Activated naive CD4-positive, alpha-beta T cell treated with anti-CD3 and anti-CD28 coated beads for 36 hours (primary cell): ENCODE measurements at regions of chr18 and their contacts with region 1.

Region 1: GRCh38 chr18:6920099-6920899 is 190.8 kb downstream of the ARHGAP28 start:
- DNase-seq: peak; percentile 59
- H3K4me3 Mint-ChIP-seq: no peak overlapping the region
- H3K27ac Mint-ChIP-seq: no peak overlapping the region
- H3K4me1 Mint-ChIP-seq: no peaks in the 10 kb centered on the region
- H3K27me3 Mint-ChIP-seq: peaks cover 7% of the 10 kb centered on the region

Region 2: GRCh38 chr18:6342990-6343389 is 577.3 kb before region 1 on chr18:
- CTCF ChIA-PET with region 1: no interaction called
- intact Hi-C with region 1: no loop called
- DNase-seq: no peak
- H3K4me3 Mint-ChIP-seq: no peak overlapping the region
- H3K27ac Mint-ChIP-seq: no peak overlapping the region
- H3K4me1 Mint-ChIP-seq: no peaks in the 10 kb centered on the region
- H3K27me3 Mint-ChIP-seq: no peaks in the 10 kb centered on the region

Region 3: DNA sequence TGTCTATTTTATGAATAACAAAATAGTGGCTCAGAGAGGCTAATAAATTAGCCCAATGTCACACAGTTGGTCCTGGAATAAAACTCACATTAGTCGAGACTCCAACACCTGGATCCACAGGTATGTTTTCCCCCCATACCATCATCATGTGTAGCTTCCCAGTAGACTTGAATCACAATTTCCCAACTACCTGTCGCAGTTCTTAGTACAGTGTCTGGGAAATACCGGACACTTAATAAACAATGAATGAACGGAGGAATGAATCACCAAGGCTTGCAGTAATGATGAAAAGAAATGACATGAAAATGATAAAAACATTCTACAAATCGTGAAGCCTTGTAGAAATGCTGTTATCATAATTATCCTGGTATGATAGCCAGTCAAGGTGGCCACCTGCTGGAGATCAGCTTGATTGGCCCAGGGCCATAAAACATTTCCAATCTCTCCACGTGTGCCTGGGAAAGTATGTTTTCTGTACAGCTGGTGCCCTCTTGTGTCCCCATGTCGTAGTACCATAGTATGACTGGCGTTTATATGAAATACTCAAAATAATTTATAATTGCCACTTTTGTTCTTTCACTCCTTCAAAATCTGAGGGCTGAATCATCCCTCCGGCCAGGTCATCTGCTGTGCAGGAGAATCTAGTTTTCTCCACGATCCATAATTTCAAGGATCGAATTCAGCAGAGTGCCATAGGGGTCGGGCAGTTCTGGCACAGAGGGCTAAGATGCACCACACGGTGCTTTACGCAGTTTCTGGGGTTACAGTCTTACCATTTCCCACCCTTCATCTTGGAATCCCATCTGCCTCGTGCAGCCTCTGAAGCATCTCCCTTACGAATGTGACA is 101.9 kb after region 1 on chr18:
- CTCF ChIA-PET with region 1: no interaction called
- intact Hi-C with region 1: loop called (anchors 5 kb)
- DNase-seq: peak; percentile 18
- H3K4me3 Mint-ChIP-seq: no peak overlapping the region
- H3K27ac Mint-ChIP-seq: no peak overlapping the region
- H3K4me1 Mint-ChIP-seq: no peaks in the 10 kb centered on the region
- H3K27me3 Mint-ChIP-seq: peaks cover 4% of the 10 kb centered on the region

Region 4: DNA sequence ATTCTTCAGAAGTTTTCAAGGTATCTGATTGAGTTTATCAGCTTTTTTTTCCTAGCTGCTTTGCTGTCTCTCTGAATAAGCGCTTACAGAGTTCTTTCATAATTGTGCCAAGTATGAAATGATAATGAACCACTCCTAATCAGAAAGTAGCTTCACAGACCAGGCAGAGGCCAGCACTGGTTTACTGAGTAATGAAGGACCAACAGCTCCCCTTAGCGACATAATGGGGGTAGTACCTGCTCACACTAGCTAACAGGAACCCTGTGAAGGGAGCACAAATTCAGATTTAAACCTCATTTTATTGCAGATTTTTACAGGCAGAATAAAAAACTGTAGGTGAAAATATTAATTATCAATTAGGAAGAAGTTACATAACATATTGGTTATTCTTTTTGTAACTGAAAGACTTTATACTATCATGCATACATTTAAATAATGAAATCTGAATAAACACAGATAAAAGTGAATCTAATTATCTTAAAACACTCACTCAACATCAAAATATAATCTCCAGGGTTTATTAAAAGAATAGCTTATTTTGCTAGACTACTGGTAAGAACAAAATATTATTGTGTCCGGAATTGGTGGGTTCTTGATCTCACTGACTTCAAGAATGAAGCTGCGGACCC is 256.9 kb after region 1 on chr18:
- CTCF ChIA-PET with region 1: no interaction called
- intact Hi-C with region 1: loop called (anchors 10 kb)
- DNase-seq: peak; percentile 27
- H3K4me3 Mint-ChIP-seq: no peak overlapping the region
- H3K27ac Mint-ChIP-seq: no peak overlapping the region
- H3K4me1 Mint-ChIP-seq: no peaks in the 10 kb centered on the region
- H3K27me3 Mint-ChIP-seq: peaks cover 3% of the 10 kb centered on the region

Region 5: DNA sequence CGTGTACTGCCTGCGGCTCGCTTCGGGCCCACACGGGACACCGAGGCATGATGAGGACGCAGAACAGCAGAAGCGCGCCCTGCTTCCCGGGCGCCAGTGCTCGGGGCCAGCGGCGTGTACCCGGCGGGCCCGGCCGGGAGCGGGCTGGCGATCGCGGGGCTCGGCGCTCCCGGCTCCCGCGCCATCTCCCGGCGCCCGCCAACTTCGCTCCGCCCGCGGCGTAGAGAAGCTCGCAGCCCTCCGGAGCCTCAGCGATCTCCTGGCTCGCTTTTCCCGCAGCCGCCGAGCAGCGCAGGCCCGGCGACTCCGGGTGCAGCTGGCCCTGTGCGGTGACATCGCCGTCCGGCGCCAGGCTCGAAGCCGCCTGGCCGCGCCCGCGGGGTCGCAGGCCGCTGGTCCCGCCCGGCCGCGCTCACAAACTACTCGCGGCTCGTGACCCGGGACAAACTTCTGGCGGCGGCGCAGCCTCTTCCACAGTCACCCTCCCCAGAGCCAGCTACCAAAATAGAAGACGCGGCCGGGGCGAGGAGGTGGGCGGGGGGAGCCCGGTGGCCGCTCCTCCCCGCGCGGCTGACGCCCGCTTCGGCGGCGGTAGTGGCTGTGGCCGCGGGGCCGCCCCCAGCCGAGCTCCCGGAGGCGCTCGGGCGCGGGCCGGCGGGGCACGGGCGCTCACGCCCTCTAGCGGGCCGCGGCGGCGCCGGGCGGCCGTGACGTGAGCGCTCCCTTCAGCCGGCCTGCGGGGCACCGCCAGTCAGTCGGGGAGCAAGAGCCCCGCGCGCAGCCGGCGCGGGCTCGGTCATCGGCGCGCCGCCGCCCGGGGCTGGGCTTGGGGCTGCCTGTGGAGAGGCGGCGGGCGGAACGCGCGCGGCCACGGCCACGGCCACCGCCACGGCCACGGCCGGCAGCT is 646.5 kb after region 1 on chr18 and contains the start of gene PTPRM:
- CTCF ChIA-PET with region 1: no interaction called
- intact Hi-C with region 1: loop called (anchors 10 kb)
- DNase-seq: peak; percentile 54
- H3K4me3 Mint-ChIP-seq: peak within 1 kb of the TSS; percentile 10
- H3K27ac Mint-ChIP-seq: no peak within 1 kb of the TSS
- H3K4me1 Mint-ChIP-seq: no peaks in the 10 kb centered on the region
- H3K27me3 Mint-ChIP-seq: peaks cover 50% of the 10 kb centered on the region
- total RNA-seq, gene PTPRM: 4.3 to 6.1 TPM